Naive thymus-derived CD8-positive, alpha-beta T cell (primary cell): ENCODE measurements at regions of chrX and their contacts with region 1.

Region 1: DNA sequence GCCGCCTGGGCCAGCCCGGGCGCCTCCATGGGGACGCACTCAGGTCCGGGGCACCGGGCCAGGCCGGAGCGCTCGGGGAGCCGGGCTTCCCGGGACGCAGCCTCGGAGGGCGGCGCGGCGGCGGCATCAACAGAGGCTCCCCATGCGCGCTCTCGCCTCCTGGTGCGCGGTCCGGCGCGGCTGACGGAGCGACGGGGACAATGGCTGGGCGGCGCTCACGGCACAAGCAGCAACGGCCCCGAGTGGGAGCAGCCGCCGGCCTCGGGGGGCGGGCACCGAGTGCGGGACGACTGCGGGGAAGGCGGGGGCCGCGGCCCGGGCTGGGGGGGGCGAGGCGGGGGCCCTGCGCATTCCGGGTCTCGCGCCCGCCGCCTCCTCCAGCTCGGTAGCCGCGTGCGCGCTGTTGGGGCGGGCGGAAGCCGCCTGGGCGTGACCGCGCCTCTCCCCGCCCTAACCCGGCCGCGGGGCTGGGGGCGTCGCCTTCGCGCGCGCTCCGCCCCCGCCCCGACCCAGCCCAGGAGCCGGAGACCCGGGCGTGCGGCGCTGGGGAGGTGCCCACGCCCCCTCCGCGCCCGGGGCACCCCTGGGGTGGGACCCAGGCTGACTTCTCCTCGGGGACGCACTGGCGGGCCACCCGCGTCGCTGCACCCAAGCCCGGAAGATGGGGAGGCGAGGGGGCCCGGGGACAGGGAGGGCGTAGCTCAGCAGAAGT is at the start of gene PRKX:
- DNase-seq: peak; percentile 58 to 85 (median 72)
- ATAC-seq: peak; percentile 84 to 86
- H3K4me3 Mint-ChIP-seq: peak within 1 kb of the TSS; percentile 90 to 98 (median 96)
- H3K27ac Mint-ChIP-seq: peak within 1 kb of the TSS; percentile 68 to 95 (median 91)
- H3K4me1 Mint-ChIP-seq: peaks cover 3 to 31% (median 19%) of the 10 kb centered on the region in 4 donors
- H3K27me3 Mint-ChIP-seq: no peaks in the 10 kb centered on the region
- polyA plus RNA-seq, gene PRKX: 30.9 to 46.7 (median 45.9) TPM

Region 2: GRCh38 chrX:3699821-3700381 is 13.5 kb before region 1 on chrX:
- POLR2A ChIA-PET with region 1: interaction called, 15 read pairs
- DNase-seq: peak in 3 of 10 donors; percentile 37 to 41 (median 38)
- ATAC-seq: peak; percentile 30 to 63
- H3K4me3 Mint-ChIP-seq: peak overlapping the region; percentile 77 to 94 (median 89)
- H3K27ac Mint-ChIP-seq: peak overlapping the region; percentile 91 to 98 (median 96)
- H3K4me1 Mint-ChIP-seq: peaks cover 7 to 73% (median 57%) of the 10 kb centered on the region in 4 donors
- H3K27me3 Mint-ChIP-seq: no peaks in the 10 kb centered on the region

Region 3: DNA sequence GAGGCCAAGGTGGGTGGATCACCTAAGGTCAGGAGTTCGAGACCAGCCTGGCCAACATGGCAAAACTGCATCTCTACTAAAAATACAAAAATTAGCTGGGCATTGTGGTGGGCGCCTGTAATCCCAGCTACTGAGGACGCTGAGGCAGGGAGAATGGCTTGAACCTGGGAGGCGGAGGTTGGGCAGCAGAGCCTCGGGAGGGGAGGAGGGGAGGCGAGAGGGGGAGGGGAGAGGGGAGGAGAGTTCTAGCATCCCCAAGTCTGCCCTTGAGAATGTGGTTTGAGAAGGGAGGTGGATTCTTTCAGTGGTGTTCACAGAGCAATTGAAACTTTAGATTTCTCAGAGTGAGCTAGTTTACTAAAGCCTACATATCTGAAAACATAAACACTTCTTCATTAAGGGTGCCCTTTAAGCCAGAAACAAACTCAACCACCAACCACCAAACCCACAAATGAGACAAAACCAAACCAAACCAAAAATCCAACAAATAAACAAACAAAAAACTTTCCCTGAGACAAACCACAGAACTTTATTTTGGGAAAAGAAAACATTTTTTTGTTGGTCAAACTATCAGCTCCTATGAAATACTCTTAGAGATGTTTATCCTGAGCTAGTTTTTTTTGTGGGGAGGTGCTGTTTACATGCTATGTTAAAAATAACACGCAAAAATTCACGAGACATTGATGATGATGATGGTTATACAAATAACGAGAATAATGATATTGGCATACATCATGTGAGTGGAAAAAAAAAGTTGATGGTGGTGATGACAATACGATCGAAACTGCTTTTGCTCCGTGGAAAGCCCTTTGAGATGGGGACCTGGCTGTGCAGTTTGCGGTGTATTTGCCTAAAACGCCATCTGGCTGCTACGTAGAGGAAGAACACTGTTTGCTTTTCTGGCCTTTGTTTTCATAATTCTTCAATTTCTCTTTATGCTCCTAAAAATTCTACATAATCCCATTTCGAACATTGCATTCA is 98.2 kb after region 1 on chrX:
- POLR2A ChIA-PET with region 1: no interaction called
- DNase-seq: peak; percentile 9 to 70 (median 33)
- ATAC-seq: no peak
- H3K4me3 Mint-ChIP-seq: peak overlapping the region; percentile 30 to 76 (median 52)
- H3K27ac Mint-ChIP-seq: peak overlapping the region in 8 of 10 donors; percentile 8 to 79 (median 54)
- H3K4me1 Mint-ChIP-seq: peaks cover 0 to 15% (median 10%) of the 10 kb centered on the region in 4 donors
- H3K27me3 Mint-ChIP-seq: peaks cover 0 to 27% (median 9%) of the 10 kb centered on the region in 5 donors